GM13976 (cell line): ENCODE measurements at regions of chr1 and their contacts with region 1.

Region 1: DNA sequence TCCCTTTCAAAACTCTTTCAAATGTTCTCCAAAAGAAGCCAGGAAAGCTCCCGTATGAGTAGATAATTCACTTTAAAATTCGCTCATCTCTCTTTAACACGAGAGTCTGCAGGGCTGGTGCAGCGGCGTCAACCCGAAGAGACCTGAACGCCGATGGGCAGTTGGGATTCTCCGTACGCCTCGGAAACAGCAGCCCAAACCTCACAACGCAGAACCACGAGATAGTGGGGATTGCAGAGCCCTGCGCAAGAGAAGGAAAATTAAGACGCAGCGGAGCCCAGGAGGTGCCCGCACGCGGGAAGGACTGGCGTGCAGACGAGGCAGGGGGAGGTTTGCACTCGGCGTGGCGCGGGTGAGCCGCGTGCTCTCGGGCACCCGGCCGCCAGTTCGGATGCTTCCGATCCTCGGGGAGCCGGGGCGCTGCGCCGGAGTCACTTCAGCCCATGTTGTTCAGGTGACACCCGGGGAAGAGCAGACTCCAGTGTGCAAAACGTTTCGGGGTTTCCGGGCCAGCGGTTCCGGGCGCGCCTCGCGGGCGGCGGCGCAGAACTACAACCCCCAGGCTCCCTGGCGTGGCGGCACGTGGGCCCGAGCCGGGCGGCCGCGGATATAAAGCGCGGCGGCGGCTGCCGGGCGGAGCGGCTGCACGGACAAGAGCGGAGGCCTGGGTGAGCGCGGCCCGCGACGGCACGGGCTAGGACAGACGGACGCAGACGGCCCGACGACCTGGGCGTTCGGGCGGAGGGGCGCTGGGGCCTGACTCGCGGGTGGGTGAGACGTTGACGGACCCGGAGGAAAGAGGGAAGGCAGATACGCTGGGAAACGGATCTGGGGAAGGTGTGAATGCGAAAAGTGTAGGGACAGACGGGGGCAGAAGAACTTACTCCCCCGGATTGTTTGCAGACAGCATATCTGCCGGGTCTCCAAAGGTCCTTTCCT is at the start of gene NPL:
- DNase-seq: peak; percentile 90
- CTCF ChIP-seq: no peak

Region 2: DNA sequence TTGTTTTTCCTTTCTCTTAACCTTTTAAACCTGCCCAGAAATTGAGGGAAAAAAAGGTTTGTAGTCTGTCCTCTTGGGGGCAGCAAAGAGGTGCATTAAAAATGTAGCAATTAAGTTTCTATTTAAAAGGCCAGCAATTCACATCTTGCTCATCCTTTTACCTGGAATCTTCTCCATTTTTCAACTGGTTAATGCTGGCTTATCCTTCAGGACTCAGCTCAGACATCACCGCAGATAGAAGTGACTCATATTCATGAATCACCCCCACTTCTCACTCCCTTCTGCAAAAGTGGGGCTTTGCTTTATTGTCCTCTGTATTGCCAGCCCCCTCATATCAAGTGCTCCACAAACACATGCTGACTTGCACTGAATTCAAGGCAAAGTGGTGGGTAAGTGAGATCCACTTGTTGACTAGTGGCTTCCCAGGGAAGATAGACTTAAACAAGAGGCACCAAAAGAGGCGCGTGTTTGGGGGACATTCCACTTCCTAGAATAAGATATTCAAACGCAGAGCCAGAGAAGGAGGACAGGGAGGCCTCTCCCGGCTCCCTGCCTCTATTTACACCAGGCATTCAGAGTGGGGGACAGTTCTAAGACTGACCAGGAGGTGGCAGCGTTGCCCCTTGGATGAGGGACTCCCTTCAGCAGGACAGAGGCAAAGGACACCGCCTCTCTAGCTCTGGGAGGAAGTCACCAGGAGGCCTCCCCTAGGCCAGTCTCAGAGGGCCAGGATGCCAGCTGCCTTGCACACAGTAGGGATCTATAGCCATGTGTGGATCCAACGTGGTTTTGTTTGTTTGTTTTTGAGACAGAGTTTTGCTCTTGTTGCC is 704.7 kb before region 1 on chr1:
- in situ Hi-C with region 1: loop called (anchors 10 kb)
- DNase-seq: peak; percentile 86
- CTCF ChIP-seq: peak; percentile 75

Region 3: GRCh38 chr1:182446033-182446669 is 343.3 kb before region 1 on chr1:
- in situ Hi-C with region 1: loop called (anchors 10 kb)
- DNase-seq: peak; percentile 66
- CTCF ChIP-seq: peak; percentile 55

Region 4: DNA sequence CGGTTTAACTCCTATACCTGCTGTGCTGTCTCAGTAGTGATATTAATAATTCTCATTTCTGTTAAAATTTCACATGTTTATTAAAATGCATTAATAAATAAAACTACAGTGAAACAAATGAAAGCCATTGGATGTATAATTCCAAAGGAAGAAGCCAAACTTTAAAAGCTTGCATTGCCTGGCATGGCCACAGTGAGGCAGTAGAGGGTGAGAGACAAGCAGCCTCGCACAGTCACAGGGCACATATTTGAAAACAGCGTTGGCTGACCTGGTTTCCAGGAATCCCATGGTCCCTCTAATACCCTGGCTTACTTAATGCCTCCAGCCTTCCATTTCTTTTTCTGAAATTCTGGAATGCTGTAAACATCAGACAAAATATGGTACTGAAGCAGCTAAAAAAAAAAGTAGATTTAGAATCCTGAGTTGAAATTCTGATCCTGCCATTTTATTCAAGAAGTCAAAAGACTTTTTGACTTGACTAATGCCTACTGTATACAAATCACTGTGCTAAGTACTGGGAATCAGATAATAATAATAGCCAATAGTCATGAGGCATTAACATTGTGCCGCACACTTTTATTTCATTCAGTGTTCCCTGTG is 193.7 kb before region 1 on chr1:
- in situ Hi-C with region 1: loop called (anchors 5 kb)
- DNase-seq: peak; percentile 59
- CTCF ChIP-seq: peak; percentile 81

Region 5: GRCh38 chr1:183318433-183318832 is 529.0 kb after region 1 on chr1:
- in situ Hi-C with region 1: no loop called
- DNase-seq: peak; percentile 77
- CTCF ChIP-seq: peak; percentile 44